IMR-90 (cell line): ENCODE measurements at regions of chr1 and their contacts with region 1.

Region 1: DNA sequence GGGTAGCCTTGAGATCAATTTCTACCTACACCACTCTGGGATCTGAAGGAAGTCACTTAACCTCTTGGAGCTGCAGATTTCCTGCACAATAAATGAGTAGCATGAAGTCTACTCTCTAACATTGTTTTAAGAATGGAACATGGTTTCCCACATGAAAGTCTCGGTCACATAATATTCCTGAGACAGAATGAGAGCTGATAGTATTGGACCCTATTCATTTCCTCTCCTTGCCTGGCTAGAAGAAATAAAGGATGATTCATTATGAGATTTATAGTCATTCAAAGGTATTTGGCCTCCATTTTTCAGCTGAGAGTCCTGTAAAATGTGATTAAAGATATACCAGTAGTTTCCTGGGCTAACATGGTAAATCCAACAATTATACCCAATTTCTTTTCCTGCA is 56.7 kb downstream of the ARHGAP29 start:
- DNase-seq: peak; percentile 16
- ATAC-seq: no peak
- H3K4me3 ChIP-seq: no peak overlapping the region
- H3K27ac ChIP-seq: no peak overlapping the region
- H3K4me1 ChIP-seq: no peaks in the 10 kb centered on the region
- H3K27me3 ChIP-seq: no peaks in the 10 kb centered on the region
- CTCF ChIP-seq: no peak
- POLR2A ChIP-seq: no peak
- RAD21 ChIP-seq: no peak

Region 2: GRCh38 chr1:94218332-94218731 is 37.7 kb after region 1 on chr1:
- CTCF ChIA-PET with region 1: no interaction called
- POLR2A ChIA-PET with region 1: no interaction called
- dilution Hi-C with region 1: no loop called
- in situ Hi-C with region 1: no loop called
- intact Hi-C with region 1: loop called (anchors 5 kb)
- DNase-seq: no peak
- ATAC-seq: no peak
- H3K4me3 ChIP-seq: no peak overlapping the region
- H3K27ac ChIP-seq: no peak overlapping the region
- H3K4me1 ChIP-seq: no peaks in the 10 kb centered on the region
- H3K27me3 ChIP-seq: no peaks in the 10 kb centered on the region
- CTCF ChIP-seq: no peak
- POLR2A ChIP-seq: no peak
- RAD21 ChIP-seq: no peak